HEK293 (cell line): ENCODE measurements at regions of chr5 and their contacts with region 1.

Region 1: DNA sequence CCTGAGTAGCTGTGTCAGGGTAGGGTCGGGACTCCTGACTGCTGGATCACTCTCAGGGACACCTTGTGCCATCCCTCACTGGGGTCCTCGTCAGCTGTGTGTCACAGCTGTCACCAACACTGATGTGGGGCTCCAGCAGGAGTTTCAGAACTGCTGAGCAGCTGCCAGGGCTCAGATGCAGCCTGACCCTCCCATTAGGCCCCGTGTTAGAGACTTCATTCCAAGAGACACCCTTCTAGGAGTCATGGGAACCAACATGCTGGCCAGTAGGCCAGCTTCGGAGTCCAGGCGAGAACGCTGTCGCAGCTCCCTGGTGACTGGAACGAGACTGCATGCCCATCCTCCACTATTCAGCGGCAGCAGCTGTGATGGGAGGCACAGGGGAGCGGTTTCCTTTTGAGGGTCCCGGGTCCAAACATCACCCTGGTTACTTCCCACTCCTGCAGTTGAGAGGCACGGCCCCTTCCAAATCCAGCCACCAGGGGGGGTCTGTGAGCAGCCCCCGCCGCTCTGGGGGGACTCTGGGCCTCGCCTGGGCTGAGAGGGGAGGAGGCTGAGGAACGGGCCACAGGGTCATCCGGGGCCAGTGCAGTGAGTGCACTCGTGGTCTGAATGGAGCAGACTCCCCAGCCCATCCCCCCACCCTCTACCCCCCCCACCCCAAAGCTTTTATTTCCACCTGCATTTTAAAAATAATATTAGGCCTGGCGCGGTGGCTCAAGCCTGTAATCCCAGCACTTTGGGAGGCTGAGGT is 12.6 kb upstream of the TCF7 start:
- H3K4me3 ChIP-seq: no peak overlapping the region
- H3K27ac ChIP-seq: no peak overlapping the region
- H3K4me1 ChIP-seq: no peaks in the 10 kb centered on the region
- CTCF ChIP-seq: peak; percentile 70; the same call in 1 of the 2 replicates

Region 2: DNA sequence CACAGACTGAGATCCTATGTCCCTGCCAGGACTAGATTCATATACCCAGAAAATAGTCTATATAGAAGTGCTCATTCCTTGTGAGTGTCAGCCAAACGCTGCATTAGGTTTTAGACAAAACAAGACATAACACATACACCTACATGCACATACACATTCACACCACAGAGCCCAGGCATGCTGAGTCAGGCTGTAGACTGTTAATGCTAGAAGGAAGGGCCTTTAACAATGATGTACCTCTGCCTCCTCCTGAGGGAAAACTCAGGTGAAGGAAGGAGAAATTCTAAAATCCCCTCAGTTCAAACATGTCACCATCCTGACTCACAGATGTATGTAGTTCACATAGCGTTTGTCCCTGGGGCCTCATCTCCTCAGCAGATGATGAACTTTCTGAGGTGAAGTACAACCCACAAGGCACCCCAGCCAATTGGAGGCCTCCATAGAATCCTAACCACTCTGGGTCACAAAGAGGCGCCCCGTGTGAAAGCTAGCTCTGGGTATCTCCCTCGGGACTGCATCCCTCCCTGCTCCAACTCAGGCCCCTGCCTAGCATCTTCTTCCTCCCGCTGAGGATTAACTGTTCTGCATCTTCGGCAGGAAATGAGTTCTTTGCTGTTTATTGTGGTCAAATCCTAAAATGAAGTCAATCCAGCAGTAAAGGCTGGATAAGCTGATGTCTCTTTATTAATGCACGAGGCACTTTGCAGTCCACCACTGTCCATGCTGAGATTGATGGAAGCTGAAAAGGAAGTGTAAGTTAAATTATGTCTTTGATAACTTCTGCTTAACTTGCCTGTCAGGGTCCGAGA is 448.7 kb before region 1 on chr5:
- CTCF ChIA-PET with region 1: no interaction called
- POLR2A ChIA-PET with region 1: no interaction called
- H3K4me3 ChIP-seq: no peak overlapping the region
- H3K27ac ChIP-seq: no peak overlapping the region
- H3K4me1 ChIP-seq: no peaks in the 10 kb centered on the region
- CTCF ChIP-seq: no peak

Region 3: DNA sequence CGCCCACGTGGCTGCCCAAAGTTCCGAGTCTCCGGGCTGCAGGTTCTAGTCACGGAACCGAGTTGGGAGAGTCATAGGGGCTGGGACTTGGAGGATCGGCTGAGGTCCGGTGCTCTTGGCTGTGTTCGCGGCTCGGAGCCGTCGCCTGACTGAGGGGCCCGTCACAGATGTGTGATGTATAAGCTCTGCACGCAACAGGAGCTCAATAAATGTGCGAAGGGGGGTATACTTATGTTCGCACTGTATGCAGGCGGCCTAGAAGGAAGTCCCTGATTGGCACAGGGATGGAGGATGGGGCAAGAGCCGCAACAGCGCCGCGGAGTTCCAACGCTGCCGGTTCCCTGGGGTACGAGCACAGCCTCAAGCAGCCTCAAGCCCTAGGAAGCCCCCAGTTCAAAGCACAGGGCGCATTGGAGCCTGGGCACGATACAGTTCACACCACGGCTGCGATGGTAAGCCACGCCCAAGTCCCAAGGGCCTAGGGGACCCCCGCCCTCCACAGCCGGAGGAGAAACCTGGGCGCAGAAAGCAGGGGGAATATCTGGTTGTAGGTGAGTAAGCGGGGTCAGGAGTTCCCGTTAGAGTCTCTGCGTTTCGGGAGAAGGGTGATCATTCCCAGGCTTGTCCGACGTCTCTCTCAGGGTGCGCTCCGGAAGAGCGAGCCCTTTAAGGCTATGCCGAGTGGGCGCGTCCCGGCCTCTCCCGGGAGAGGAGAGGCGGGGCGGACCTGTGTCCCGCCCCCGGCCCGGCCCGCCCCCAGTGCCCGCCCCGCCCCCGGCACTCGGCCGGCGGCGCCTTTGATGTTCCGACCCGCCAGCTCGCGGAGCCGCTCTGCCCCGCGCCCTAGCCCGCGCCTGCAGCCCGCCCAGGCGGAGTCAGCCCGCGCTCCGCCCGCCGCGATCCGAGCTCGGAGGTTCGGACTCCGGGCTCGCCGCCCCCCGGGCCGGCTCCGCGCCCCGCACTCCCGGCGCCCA is 12.3 kb after region 1 on chr5 and contains the start of gene TCF7:
- CTCF ChIA-PET with region 1: interaction called, 56 read pairs
- POLR2A ChIA-PET with region 1: no interaction called
- H3K4me3 ChIP-seq: peak within 1 kb of the TSS; percentile 60
- H3K27ac ChIP-seq: peak within 1 kb of the TSS; percentile 56; the same call in 1 of the 2 replicates
- H3K4me1 ChIP-seq: no peaks in the 10 kb centered on the region
- CTCF ChIP-seq: no peak

Region 4: GRCh38 chr5:134145779-134146581 is 44.1 kb after region 1 on chr5:
- CTCF ChIA-PET with region 1: interaction called, 45 read pairs
- POLR2A ChIA-PET with region 1: interaction called, 3 read pairs
- H3K4me3 ChIP-seq: no peak overlapping the region
- H3K27ac ChIP-seq: no peak overlapping the region
- H3K4me1 ChIP-seq: peaks cover 9% of the 10 kb centered on the region; the same call in 1 of the 2 replicates
- CTCF ChIP-seq: peak; percentile 83